Activated CD4-positive, alpha-beta T cell treated with anti-CD3 and anti-CD28 coated beads for 36 hours (primary cell): ENCODE measurements at regions of chr15 and their contacts with region 1.

Region 1: GRCh38 chr15:69576035-69576526 is 123.5 kb downstream of the RPLP1 start:
- DNase-seq: peak; percentile 85
- ATAC-seq: peak; percentile 59
- H3K4me3 Mint-ChIP-seq: no peak overlapping the region
- H3K27ac Mint-ChIP-seq: peak overlapping the region; percentile 16
- H3K4me1 Mint-ChIP-seq: peaks cover 37% of the 10 kb centered on the region
- H3K27me3 Mint-ChIP-seq: no peaks in the 10 kb centered on the region

Region 2: GRCh38 chr15:69141286-69141701 is 434.8 kb before region 1 on chr15:
- CTCF ChIA-PET with region 1: no interaction called
- POLR2A ChIA-PET with region 1: no interaction called
- intact Hi-C with region 1: no loop called
- DNase-seq: no peak
- ATAC-seq: no peak
- H3K4me3 Mint-ChIP-seq: no peak overlapping the region
- H3K27ac Mint-ChIP-seq: no peak overlapping the region
- H3K4me1 Mint-ChIP-seq: no peaks in the 10 kb centered on the region
- H3K27me3 Mint-ChIP-seq: peaks cover 33% of the 10 kb centered on the region

Region 3: DNA sequence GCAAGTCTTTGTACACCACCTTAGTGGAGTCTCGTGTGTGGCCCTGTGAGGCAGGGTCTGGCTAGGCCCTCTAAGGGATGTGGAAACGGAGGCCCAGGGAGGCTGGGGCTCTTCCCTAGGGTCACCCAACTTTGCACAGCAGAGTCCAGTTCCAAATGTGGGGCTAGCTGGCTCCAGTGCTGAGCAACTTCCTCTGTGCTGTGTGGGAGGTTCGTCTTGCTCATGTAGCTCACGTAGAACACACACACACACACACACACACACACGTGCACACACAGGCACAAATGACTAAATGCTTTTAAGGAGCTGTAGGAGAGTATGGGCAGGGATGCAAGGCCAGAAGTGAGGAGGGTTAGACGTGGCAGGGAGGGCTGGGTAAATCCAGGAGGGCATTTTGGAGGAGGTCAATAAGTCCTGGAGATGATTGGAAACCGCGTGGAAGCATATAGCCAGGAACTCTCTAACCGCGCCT is 90.4 kb after region 1 on chr15:
- CTCF ChIA-PET with region 1: no interaction called
- POLR2A ChIA-PET with region 1: no interaction called
- intact Hi-C with region 1: loop called in 1 of 2 experiments (anchors 1 kb)
- DNase-seq: peak; percentile 80
- ATAC-seq: peak; percentile 69
- H3K4me3 Mint-ChIP-seq: no peak overlapping the region
- H3K27ac Mint-ChIP-seq: peak overlapping the region; percentile 80
- H3K4me1 Mint-ChIP-seq: peaks cover 29% of the 10 kb centered on the region
- H3K27me3 Mint-ChIP-seq: no peaks in the 10 kb centered on the region

Region 4: GRCh38 chr15:69719527-69720240 is 143.6 kb after region 1 on chr15:
- CTCF ChIA-PET with region 1: interaction called, 3 read pairs
- POLR2A ChIA-PET with region 1: no interaction called
- intact Hi-C with region 1: loop called (anchors 1 to 10 kb)
- DNase-seq: peak; percentile 76
- ATAC-seq: peak; percentile 89
- H3K4me3 Mint-ChIP-seq: no peak overlapping the region
- H3K27ac Mint-ChIP-seq: peak overlapping the region; percentile 28
- H3K4me1 Mint-ChIP-seq: peaks cover 84% of the 10 kb centered on the region
- H3K27me3 Mint-ChIP-seq: peaks cover 4% of the 10 kb centered on the region

Region 5: GRCh38 chr15:70259028-70259424 is 682.9 kb after region 1 on chr15:
- CTCF ChIA-PET with region 1: no interaction called
- POLR2A ChIA-PET with region 1: no interaction called
- intact Hi-C with region 1: loop called in 1 of 2 experiments (anchors 5 kb)
- DNase-seq: peak; percentile 54
- ATAC-seq: peak; percentile 17
- H3K4me3 Mint-ChIP-seq: peak overlapping the region; percentile 15
- H3K27ac Mint-ChIP-seq: peak overlapping the region; percentile 57
- H3K4me1 Mint-ChIP-seq: peaks cover 32% of the 10 kb centered on the region
- H3K27me3 Mint-ChIP-seq: peaks cover 3% of the 10 kb centered on the region

Region 6: DNA sequence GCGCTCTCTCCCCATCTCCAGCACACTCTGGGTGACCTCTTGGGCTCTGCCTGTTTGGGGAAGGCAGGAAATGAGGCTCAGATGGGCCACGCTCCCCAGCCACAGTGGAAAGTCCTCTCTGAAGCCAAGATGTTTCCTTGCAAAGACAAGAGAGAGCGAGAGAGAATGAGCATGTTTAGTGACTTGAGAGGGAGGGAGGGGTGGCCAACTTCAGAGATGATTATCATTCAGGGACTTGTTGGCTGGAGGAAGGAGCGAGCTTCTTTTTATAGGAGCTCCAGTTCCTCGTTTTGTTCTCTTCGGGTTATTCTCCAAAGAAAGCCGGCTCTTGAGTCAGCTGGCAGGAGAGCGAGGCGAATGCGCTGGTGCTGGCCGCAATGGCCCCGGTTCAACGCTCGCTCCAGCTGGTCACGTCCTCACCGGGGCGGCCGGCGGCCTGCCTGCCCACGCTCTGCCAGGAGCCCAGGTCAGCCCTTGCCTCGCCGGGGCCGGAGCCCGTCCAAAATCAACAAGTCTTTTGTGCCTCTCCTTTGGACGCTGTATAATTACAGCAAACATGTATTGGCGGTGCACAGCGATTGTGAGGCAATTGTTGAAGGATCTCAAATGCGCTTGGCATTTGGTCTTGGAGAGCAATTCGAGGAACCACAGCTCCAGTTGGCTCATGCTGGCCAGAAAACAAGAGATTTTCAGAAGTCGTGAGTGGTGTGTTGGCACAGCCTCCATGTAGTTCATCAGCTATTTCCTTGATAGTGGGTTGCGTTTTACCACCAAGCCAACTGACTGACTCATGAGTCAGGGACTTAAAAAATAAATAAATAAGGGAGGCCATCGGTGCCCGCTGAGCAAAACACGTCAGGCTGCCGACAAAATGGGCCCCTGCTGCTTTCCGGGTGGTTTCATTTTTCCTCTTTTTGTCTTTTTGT is 898.7 kb after region 1 on chr15:
- CTCF ChIA-PET with region 1: no interaction called
- POLR2A ChIA-PET with region 1: no interaction called
- intact Hi-C with region 1: loop called in 1 of 2 experiments (anchors 5 kb)
- DNase-seq: peak; percentile 54
- ATAC-seq: peak; percentile 42
- H3K4me3 Mint-ChIP-seq: no peak overlapping the region
- H3K27ac Mint-ChIP-seq: no peak overlapping the region
- H3K4me1 Mint-ChIP-seq: peaks cover 27% of the 10 kb centered on the region
- H3K27me3 Mint-ChIP-seq: peaks cover 34% of the 10 kb centered on the region